Colonic mucosa (tissue), 4 donors: ENCODE measurements at regions of chr4 and their contacts with region 1.

Region 1: GRCh38 chr4:52704661-52705060 is 45.6 kb upstream of the USP46 start:
- DNase-seq: no peak
- H3K4me3 ChIP-seq: no peak overlapping the region
- H3K27ac ChIP-seq: no peak overlapping the region
- H3K4me1 ChIP-seq: no peaks in the 10 kb centered on the region
- H3K27me3 ChIP-seq: no peaks in the 10 kb centered on the region
- CTCF ChIP-seq: no peak

Region 2: GRCh38 chr4:52358883-52359321 is 345.8 kb before region 1 on chr4:
- intact Hi-C with region 1: no loop called
- DNase-seq: no peak
- H3K4me3 ChIP-seq: no peak overlapping the region
- H3K27ac ChIP-seq: no peak overlapping the region
- H3K4me1 ChIP-seq: no peaks in the 10 kb centered on the region
- H3K27me3 ChIP-seq: no peaks in the 10 kb centered on the region
- CTCF ChIP-seq: no peak

Region 3: DNA sequence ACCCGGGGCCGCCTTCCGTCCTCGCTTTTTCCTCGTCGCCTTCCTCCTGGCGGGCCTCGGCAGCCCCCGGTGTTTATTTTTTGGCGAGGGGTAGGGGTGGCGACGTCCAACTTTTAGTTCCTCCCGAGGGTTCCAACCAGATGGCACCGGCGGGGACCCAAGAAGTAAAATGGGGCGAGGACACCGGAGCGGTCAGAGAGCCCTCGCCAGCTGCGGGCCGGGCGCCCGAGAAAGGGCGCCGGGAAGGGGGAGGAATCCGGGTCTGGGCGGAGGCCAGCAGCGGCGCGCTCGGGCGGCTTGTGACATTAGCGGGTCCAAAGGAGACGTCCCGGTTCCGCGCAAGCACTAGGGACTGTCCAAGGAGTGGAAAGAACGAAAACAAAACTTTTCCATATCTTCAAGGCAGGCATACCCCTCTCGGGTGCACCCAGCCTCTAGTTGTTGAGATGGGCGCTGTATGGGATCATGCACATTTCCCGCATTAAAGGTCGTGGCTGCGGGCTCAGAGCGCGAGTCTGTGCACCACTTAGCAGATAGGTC is 44.9 kb before region 1 on chr4:
- intact Hi-C with region 1: loop called (anchors 5 kb)
- DNase-seq: peak; percentile 71
- H3K4me3 ChIP-seq: peak overlapping the region; percentile 84
- H3K27ac ChIP-seq: peak overlapping the region; percentile 93
- H3K4me1 ChIP-seq: peaks cover 3% of the 10 kb centered on the region
- H3K27me3 ChIP-seq: no peaks in the 10 kb centered on the region
- CTCF ChIP-seq: no peak